Activated B cell treated with CpG ODN at 0.5 μM for 24 hours (primary cell): ENCODE measurements at regions of chr1 and their contacts with region 1.

Region 1: GRCh38 chr1:155250633-155251449 is 4.4 kb downstream of the ENTREP3 start:
- DNase-seq: peak; percentile 95
- ATAC-seq: peak; percentile 96
- H3K4me3 Mint-ChIP-seq: peak overlapping the region; percentile 73
- H3K27ac Mint-ChIP-seq: peak overlapping the region; percentile 39
- H3K4me1 Mint-ChIP-seq: peaks cover 29% of the 10 kb centered on the region
- H3K27me3 Mint-ChIP-seq: no peaks in the 10 kb centered on the region
- CTCF ChIP-seq: peak; percentile 84

Region 2: DNA sequence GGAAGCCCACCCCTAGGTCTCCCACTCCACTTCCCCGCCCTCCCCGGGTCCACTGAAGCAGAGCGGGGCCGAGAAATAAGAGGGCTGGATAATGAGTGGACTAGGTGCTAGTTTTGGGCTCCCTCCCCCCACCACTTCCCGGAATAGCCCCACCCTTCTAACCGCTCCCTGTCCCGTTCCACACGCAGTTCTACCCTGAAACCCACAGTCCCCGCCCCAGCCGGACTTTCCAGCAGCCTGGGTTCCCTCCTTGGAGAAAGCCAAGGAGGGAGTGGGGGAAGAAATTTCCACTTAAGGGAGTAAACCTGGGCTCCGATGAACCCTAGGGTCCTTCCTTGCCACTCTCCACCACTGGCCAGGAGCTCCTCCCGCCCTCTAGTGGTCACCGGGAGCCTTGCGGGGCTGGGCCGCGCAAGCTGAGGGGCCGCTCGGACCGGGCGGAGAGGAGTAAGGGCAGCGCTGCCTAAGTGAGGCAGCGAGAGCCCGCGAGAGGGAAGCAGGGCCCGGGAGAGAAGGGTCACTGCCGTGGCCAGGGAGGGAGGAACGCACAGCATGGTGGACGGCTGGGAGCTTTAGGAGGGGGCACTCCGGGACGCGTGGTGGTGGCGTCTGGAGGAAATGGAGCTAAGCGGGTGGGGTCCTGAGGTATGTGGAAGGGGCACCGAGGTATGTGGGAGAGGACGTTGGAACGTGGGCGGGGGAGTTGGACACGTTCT is 57.4 kb before region 1 on chr1:
- CTCF ChIA-PET with region 1: interaction called, 13 read pairs
- POLR2A ChIA-PET with region 1: interaction called, 5 read pairs
- intact Hi-C with region 1: no loop called
- DNase-seq: peak; percentile 81
- ATAC-seq: peak; percentile 73
- H3K4me3 Mint-ChIP-seq: peak overlapping the region; percentile 88
- H3K27ac Mint-ChIP-seq: peak overlapping the region; percentile 84
- H3K4me1 Mint-ChIP-seq: peaks cover 28% of the 10 kb centered on the region
- H3K27me3 Mint-ChIP-seq: no peaks in the 10 kb centered on the region
- CTCF ChIP-seq: peak; percentile 63

Region 3: DNA sequence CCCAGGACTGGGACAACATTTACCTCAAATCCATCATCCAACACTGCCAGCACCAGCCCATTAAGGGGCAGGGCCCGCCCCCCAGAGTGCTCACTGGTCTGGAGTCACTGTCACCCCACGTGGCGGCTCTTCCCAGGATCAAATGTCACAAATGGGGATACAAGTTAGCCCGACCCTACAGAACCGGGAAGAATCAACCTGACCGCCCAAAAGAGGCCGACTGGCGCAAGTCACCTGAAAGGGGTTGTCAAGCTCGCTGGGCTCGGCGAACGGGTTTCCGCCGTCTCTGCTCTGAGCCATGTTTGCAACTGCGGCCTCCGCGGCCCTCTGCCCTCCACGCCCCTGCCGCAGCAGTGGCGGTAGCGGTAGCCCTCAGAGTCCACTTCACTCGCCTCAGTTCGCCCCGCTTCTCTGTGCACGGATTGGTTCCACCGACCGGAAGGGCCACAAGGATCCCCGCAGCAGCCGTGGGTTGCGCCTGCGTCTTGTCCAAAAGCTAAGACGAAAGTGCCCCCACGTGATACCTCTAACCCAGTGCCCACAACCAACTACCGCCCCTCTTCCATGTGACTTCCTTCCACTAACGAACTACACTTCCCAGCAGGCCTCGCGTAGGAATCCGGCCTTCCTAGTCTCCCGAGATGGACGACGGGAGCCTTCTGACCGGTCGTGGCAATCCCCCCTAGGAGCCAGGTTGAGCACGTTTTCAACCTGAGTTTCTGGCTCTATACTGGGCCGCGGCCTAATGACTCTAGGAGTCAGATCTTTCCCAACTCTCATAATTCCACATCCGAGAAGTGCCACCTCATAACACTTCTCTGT is 11.2 kb after region 1 on chr1 and contains the start of gene SCAMP3:
- CTCF ChIA-PET with region 1: interaction called, 47 read pairs
- POLR2A ChIA-PET with region 1: interaction called, 30 read pairs
- intact Hi-C with region 1: loop called (anchors 1 kb)
- DNase-seq: peak; percentile 71
- ATAC-seq: peak; percentile 95
- H3K4me3 Mint-ChIP-seq: peak within 1 kb of the TSS; percentile 98
- H3K27ac Mint-ChIP-seq: peak within 1 kb of the TSS; percentile 92
- H3K4me1 Mint-ChIP-seq: peaks cover 33% of the 10 kb centered on the region
- H3K27me3 Mint-ChIP-seq: no peaks in the 10 kb centered on the region
- CTCF ChIP-seq: no peak
- total RNA-seq, gene SCAMP3: 71.8 and 78.6 TPM in 2 replicates

Region 4: DNA sequence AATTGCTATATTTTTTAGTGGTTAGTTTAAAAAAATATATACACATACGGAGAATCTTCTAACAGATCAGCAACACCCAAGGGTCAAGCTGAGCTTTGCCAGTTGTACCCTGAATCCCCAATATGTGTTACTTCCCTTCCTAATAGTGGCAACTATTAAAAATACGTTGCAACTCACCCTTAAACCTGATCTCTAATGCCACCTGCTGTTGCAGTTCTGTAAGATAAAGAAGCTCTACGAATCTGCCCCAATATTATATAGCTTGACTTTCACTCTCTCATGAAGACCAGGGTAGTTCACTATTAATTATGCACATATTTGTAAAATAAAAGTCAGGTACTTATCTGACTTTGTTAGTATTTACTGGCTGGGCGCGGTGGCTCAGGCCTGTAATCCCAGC is 253.4 kb after region 1 on chr1:
- CTCF ChIA-PET with region 1: interaction called, 47 read pairs
- POLR2A ChIA-PET with region 1: interaction called, 4 read pairs
- intact Hi-C with region 1: loop called (anchors 1 kb)
- DNase-seq: no peak
- ATAC-seq: peak; percentile 62
- H3K4me3 Mint-ChIP-seq: no peak overlapping the region
- H3K27ac Mint-ChIP-seq: peak overlapping the region; percentile 30
- H3K4me1 Mint-ChIP-seq: peaks cover 54% of the 10 kb centered on the region
- H3K27me3 Mint-ChIP-seq: no peaks in the 10 kb centered on the region
- CTCF ChIP-seq: no peak

Region 5: GRCh38 chr1:156160743-156161171 is 909.9 kb after region 1 on chr1:
- CTCF ChIA-PET with region 1: no interaction called
- POLR2A ChIA-PET with region 1: interaction called, 10 read pairs
- intact Hi-C with region 1: no loop called
- DNase-seq: no peak
- ATAC-seq: peak; percentile 82
- H3K4me3 Mint-ChIP-seq: peak overlapping the region; percentile 71
- H3K27ac Mint-ChIP-seq: no peak overlapping the region
- H3K4me1 Mint-ChIP-seq: peaks cover 57% of the 10 kb centered on the region
- H3K27me3 Mint-ChIP-seq: peaks cover 17% of the 10 kb centered on the region
- CTCF ChIP-seq: no peak